PC-9 (cell line): ENCODE measurements at regions of chr17 and their contacts with region 1.

Region 1: GRCh38 chr17:68468334-68468733 is 11.0 kb upstream of the WIPI1 start:
- DNase-seq: no peak
- H3K4me3 ChIP-seq: no peak overlapping the region
- H3K27ac ChIP-seq: no peak overlapping the region
- H3K4me1 ChIP-seq: no peaks in the 10 kb centered on the region
- H3K27me3 ChIP-seq: no peaks in the 10 kb centered on the region
- CTCF ChIP-seq: no peak

Region 2: GRCh38 chr17:68061504-68062313 is 406.6 kb before region 1 on chr17:
- CTCF ChIA-PET with region 1: no interaction called
- POLR2A ChIA-PET with region 1: interaction called, 24 read pairs
- intact Hi-C with region 1: no loop called
- DNase-seq: no peak
- H3K4me3 ChIP-seq: no peak overlapping the region
- H3K27ac ChIP-seq: no peak overlapping the region
- H3K4me1 ChIP-seq: no peaks in the 10 kb centered on the region
- H3K27me3 ChIP-seq: no peaks in the 10 kb centered on the region
- CTCF ChIP-seq: no peak

Region 3: DNA sequence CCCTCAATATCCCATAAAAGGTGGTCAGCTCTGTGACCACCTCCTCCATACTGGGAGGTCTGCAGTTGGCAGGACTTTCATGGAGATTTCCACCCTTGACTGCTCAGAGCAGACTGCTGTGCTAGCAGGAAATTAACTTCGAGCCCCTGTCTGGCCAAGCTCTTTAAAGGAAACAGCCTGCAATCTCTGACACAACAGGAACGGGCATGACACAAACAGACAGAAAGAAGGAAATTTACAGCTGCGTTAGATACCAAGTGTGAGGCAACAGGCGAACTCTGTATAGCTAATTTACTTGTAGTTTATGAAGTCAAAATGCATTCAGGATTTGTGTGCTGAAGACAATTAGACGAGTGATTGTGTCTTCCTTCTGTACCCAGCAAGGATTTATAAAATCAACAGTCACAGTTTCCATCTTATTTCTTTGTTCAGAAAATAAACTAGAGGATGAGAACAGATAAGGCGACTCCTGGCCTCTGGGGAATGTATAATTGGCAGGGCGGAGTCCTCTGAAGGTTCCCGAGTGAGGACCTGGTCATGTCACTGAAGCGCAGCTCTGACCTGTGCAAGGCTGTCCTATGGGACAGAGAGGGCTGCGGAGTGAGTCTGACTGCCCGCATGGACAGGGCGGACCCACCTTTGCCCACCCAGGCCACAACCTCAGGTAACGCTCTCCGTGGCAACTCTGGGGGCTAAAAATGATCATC is 27.1 kb before region 1 on chr17:
- CTCF ChIA-PET with region 1: interaction called, 12 read pairs
- POLR2A ChIA-PET with region 1: no interaction called
- intact Hi-C with region 1: no loop called
- DNase-seq: no peak
- H3K4me3 ChIP-seq: no peak overlapping the region
- H3K27ac ChIP-seq: no peak overlapping the region
- H3K4me1 ChIP-seq: peaks cover 5% of the 10 kb centered on the region; the same call in 1 of the 2 replicates
- H3K27me3 ChIP-seq: no peaks in the 10 kb centered on the region
- CTCF ChIP-seq: no peak